B cell (primary cell): ENCODE measurements at regions of chr2 and their contacts with region 1.

Region 1: DNA sequence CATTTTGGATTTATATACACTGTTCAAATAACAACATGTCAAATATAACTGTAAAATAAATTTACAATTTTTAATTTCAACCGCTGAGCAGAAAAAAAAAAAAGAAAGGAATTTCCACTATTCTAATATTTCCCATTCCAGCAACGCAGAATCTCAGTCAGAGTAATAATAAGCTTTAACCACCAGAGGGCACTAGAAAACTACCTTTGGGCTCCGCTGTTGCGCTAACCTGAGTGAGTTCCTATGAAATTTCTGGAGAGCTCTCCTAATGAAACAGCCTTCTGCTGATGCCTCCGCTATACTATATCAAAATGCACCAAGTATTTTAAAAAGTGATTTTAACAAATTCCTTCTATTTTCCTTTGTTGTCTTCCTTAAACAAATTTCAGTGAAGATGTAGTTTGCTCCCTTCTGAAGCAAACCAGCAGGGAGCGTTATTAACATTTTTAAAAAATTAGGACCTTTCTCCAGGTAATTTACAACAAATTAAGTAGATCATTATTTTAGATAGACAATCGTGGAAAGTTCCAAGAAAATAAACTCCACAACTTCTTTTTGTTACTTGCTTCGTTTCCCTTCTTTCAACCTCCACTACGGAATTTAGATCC is 23.0 kb downstream of the ERMN start:
- DNase-seq: peak; percentile 68
- ATAC-seq: peak; percentile 65
- H3K4me3 ChIP-seq: no peak overlapping the region
- H3K4me3 Mint-ChIP-seq: no peak overlapping the region
- H3K27ac ChIP-seq: no peak overlapping the region
- H3K27ac Mint-ChIP-seq: no peak overlapping the region
- H3K4me1 ChIP-seq: no peaks in the 10 kb centered on the region
- H3K4me1 Mint-ChIP-seq: peaks cover 1% of the 10 kb centered on the region
- H3K27me3 ChIP-seq: no peaks in the 10 kb centered on the region
- H3K27me3 Mint-ChIP-seq: peaks cover 4% of the 10 kb centered on the region
- CTCF ChIP-seq: peak; percentile 98

Region 2: DNA sequence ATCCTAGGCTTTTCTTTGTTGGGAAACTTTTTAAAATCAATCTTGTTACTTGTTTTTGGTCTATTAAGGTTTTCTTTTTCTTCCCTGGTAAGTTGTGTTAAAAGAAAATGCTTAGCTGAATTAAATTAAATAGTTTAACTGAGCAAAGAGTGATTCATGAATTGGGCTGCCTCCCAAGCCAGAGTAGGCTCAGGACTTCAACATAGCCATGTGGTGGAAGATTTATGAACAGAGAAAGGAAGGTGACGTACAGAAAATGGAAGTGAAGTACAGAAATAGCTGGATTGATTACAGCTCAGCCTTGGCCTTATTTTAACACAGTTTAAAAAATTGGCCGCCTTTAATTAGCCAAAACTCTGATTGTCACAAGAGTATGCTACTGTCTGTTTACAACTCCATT is 73.0 kb before region 1 on chr2:
- CTCF ChIA-PET with region 1: no interaction called
- POLR2A ChIA-PET with region 1: no interaction called
- intact Hi-C with region 1: no loop called
- DNase-seq: no peak
- ATAC-seq: no peak
- H3K4me3 ChIP-seq: no peak overlapping the region
- H3K4me3 Mint-ChIP-seq: no peak overlapping the region
- H3K27ac ChIP-seq: no peak overlapping the region
- H3K27ac Mint-ChIP-seq: no peak overlapping the region
- H3K4me1 ChIP-seq: no peaks in the 10 kb centered on the region
- H3K4me1 Mint-ChIP-seq: no peaks in the 10 kb centered on the region
- H3K27me3 ChIP-seq: no peaks in the 10 kb centered on the region
- H3K27me3 Mint-ChIP-seq: peaks cover 8% of the 10 kb centered on the region
- CTCF ChIP-seq: no peak

Region 3: GRCh38 chr2:157321466-157321865 is 18.9 kb after region 1 on chr2:
- CTCF ChIA-PET with region 1: interaction called, 95 read pairs
- POLR2A ChIA-PET with region 1: no interaction called
- intact Hi-C with region 1: no loop called
- DNase-seq: no peak
- ATAC-seq: no peak
- H3K4me3 ChIP-seq: no peak overlapping the region
- H3K4me3 Mint-ChIP-seq: no peak overlapping the region
- H3K27ac ChIP-seq: no peak overlapping the region
- H3K27ac Mint-ChIP-seq: no peak overlapping the region
- H3K4me1 ChIP-seq: no peaks in the 10 kb centered on the region
- H3K4me1 Mint-ChIP-seq: no peaks in the 10 kb centered on the region
- H3K27me3 ChIP-seq: no peaks in the 10 kb centered on the region
- H3K27me3 Mint-ChIP-seq: no peaks in the 10 kb centered on the region
- CTCF ChIP-seq: no peak

Region 4: GRCh38 chr2:157492189-157492773 is 189.7 kb after region 1 on chr2:
- CTCF ChIA-PET with region 1: interaction called, 44 read pairs
- POLR2A ChIA-PET with region 1: no interaction called
- intact Hi-C with region 1: loop called (anchors 2 kb)
- DNase-seq: peak; percentile 81
- ATAC-seq: peak; percentile 96
- H3K4me3 ChIP-seq: no peak overlapping the region
- H3K4me3 Mint-ChIP-seq: no peak overlapping the region
- H3K27ac ChIP-seq: no peak overlapping the region
- H3K27ac Mint-ChIP-seq: no peak overlapping the region
- H3K4me1 ChIP-seq: peaks cover 6 to 14% of the 10 kb centered on the region in 2 donors
- H3K4me1 Mint-ChIP-seq: peaks cover 20% of the 10 kb centered on the region
- H3K27me3 ChIP-seq: no peaks in the 10 kb centered on the region
- H3K27me3 Mint-ChIP-seq: no peaks in the 10 kb centered on the region
- CTCF ChIP-seq: peak; percentile 91

Region 5: GRCh38 chr2:157587576-157587975 is 285.0 kb after region 1 on chr2:
- CTCF ChIA-PET with region 1: interaction called, 18 read pairs
- POLR2A ChIA-PET with region 1: no interaction called
- intact Hi-C with region 1: no loop called
- DNase-seq: no peak
- ATAC-seq: no peak
- H3K4me3 ChIP-seq: no peak overlapping the region
- H3K4me3 Mint-ChIP-seq: no peak overlapping the region
- H3K27ac ChIP-seq: no peak overlapping the region
- H3K27ac Mint-ChIP-seq: no peak overlapping the region
- H3K4me1 ChIP-seq: no peaks in the 10 kb centered on the region
- H3K4me1 Mint-ChIP-seq: peaks cover under 1% of the 10 kb centered on the region
- H3K27me3 ChIP-seq: no peaks in the 10 kb centered on the region
- H3K27me3 Mint-ChIP-seq: peaks cover 2% of the 10 kb centered on the region
- CTCF ChIP-seq: no peak

Region 6: DNA sequence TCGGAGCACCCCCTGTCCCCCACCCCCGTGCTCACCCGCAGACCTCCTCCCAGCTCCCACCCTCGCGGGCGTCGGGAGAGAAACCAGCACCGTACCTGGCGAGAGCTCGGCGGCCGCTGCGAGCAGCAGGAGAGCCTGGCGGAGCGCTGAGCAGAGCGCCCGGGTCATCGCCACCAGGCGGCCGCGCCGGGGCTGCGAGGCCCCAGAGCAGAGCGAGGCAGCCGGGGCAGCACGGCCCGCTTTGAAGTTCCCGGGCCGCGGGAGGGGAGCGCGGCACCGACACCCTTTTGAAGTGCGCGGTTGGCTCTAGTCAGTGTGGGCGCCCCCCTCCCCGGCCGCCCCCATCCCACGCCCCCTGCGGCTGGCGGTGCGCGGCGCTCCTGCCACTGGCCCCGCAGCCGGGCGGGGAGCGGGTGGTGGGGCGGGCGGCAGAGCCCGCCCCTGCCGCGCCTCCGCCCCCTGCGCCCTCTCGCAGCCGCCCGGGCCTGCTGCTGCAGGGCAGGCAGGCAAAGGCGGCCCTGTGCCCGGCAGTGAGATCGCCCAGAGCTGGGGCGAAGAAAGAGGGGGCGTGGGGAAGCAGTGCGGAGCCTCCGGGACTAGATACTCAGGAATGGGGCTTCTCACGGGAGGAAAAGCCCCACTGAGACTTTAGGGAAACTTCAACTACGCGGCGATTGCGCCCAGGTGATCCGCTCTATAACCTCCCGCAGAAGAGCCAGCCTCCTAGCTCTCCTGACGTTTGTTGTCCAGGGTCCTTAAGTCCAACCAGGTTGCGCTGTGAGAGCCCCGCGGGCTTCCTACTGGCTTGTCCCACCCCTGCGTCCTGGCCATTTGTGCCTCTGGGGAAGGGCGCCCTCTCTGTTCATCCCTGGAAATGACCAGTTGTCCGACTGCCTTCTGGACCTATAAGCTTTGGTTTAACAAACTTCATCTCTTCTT is 326.1 kb after region 1 on chr2 and contains the start of gene ACVR1C:
- CTCF ChIA-PET with region 1: interaction called, 15 read pairs
- POLR2A ChIA-PET with region 1: no interaction called
- intact Hi-C with region 1: no loop called
- DNase-seq: peak; percentile 70
- ATAC-seq: peak; percentile 85
- H3K4me3 ChIP-seq: peak within 1 kb of the TSS; percentile 34 to 68 (median 57)
- H3K4me3 Mint-ChIP-seq: peak within 1 kb of the TSS; percentile 85
- H3K27ac ChIP-seq: no peak within 1 kb of the TSS
- H3K27ac Mint-ChIP-seq: peak within 1 kb of the TSS; percentile 63
- H3K4me1 ChIP-seq: peaks cover 12 to 17% of the 10 kb centered on the region in 2 donors
- H3K4me1 Mint-ChIP-seq: peaks cover 23% of the 10 kb centered on the region
- H3K27me3 ChIP-seq: peaks cover 0 to 13% (median 2%) of the 10 kb centered on the region in 4 experiments
- H3K27me3 Mint-ChIP-seq: peaks cover 19% of the 10 kb centered on the region
- CTCF ChIP-seq: peak; percentile 44
- total RNA-seq, gene ACVR1C: 0.39 and 0.52 TPM in 2 replicates

Region 7: DNA sequence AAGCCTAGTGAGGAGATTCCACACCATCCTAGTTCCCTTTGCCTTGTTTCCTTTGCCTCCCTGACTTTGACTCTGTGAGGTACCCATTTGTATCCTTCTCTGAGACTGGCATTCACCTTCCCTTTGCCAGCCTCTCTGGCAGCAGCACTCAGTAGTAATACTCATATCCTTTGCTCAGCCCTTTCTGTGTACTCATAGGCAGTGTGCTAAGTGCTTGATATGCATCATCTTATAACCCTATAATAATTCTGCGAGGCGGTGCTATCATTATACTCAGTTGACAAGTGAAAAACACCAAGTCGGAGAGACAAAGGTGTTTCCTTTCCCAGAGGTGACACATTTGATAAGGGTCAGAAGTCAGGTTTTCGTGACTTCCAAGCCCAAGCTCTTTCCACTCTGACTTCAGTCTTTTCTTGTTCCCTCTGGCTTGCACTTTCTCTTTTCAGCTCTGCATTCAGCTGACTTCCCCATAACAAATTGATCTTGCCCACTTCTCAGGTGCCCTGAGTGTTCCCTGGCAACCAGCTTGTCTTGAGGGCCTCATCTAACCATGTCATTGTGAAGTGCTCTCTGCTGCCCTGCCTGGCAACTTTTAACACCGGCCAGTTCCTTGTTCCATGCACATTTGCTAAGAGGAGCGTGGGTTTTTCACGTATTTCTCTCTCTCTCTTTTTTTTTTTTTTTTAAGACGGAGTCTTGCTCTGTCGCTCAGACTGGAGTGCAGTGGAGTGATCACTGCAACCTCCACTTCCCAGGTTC is 704.5 kb after region 1 on chr2:
- CTCF ChIA-PET with region 1: interaction called, 109 read pairs
- POLR2A ChIA-PET with region 1: no interaction called
- intact Hi-C with region 1: loop called (anchors 1 kb)
- DNase-seq: peak; percentile 42
- ATAC-seq: peak; percentile 41
- H3K4me3 ChIP-seq: no peak overlapping the region
- H3K4me3 Mint-ChIP-seq: no peak overlapping the region
- H3K27ac ChIP-seq: no peak overlapping the region
- H3K27ac Mint-ChIP-seq: no peak overlapping the region
- H3K4me1 ChIP-seq: no peaks in the 10 kb centered on the region
- H3K4me1 Mint-ChIP-seq: peaks cover 5% of the 10 kb centered on the region
- H3K27me3 ChIP-seq: peaks cover 0 to 4% (median 2%) of the 10 kb centered on the region in 4 experiments
- H3K27me3 Mint-ChIP-seq: peaks cover 17% of the 10 kb centered on the region
- CTCF ChIP-seq: no peak